Vagina (tissue), 2 donors: ENCODE measurements at regions of chr9 and their contacts with region 1.

Region 1: GRCh38 chr9:36704148-36704547 is 131.5 kb downstream of the MELK start:
- DNase-seq: no peak
- H3K4me3 ChIP-seq: no peak overlapping the region
- H3K27ac ChIP-seq: no peak overlapping the region
- H3K4me1 ChIP-seq: no peaks in the 10 kb centered on the region
- H3K27me3 ChIP-seq: no peaks in the 10 kb centered on the region
- CTCF ChIP-seq: no peak
- POLR2A ChIP-seq: no peak

Region 2: DNA sequence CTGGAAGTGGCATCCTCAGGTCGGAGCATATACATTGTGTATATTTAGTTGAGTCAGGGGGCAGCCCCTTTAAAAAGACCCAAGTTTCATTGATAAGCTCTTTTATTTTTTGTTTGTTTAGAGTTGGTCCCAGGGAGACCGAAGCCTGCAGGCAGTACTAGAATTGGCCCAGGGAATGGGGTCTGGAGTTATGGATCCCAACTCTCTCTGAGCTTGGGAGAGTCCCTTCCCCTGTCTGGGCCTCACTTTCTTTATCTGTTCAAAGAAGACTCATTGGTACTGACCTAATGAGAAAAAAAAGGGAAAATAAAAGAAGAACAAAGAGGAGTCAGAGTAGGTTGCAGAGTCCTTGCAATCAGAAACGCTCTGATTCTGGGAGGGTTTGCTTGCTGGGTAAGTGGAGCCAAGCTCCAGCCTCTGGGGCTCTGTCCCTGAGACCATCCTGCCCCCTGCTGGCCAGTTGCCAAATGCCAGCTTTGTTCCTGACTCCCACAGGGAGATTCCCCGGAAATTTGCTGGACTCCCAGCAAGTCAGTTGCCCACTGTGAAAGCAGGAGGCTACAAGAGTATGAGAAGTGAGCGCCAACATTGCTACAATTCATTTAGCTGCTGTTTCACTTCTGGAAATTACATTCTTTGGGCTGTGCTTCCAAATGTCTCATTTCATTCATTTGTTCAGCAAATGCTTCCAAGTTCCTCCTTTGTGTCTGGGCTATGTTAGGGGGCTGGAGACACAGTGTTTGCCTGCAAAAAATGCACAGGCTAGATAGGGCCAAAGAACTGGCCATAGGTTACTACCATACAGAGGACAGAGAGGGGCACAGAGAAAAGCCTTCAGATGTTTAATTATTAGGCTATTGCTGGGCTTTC is 24.7 kb after region 1 on chr9:
- intact Hi-C with region 1: no loop called
- DNase-seq: no peak
- H3K4me3 ChIP-seq: no peak overlapping the region
- H3K27ac ChIP-seq: no peak overlapping the region
- H3K4me1 ChIP-seq: no peaks in the 10 kb centered on the region
- H3K27me3 ChIP-seq: no peaks in the 10 kb centered on the region
- CTCF ChIP-seq: no peak
- POLR2A ChIP-seq: no peak

Region 3: DNA sequence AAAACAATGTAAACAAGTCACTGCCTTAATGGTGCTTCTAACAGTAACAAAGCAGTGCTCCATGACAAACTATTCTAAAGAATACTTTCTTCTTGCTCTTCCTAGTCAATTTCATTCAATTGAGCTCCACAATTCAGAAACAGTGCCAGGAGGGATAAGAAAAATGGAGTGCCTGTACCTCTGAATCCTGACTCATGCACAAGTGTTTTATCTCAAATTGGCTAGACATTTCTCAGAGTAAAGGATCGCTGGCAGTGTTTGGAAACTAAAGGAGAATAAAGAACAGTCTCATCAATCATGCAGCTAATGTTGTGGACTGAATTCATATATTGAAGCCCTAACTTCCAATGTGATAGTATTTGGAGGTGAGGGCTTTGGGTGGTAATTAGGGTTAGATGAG is 1172.2 kb after region 1 on chr9:
- intact Hi-C with region 1: loop called (anchors 10 kb)
- DNase-seq: no peak
- H3K4me3 ChIP-seq: no peak overlapping the region
- H3K27ac ChIP-seq: no peak overlapping the region
- H3K4me1 ChIP-seq: no peaks in the 10 kb centered on the region
- H3K27me3 ChIP-seq: no peaks in the 10 kb centered on the region
- CTCF ChIP-seq: no peak
- POLR2A ChIP-seq: no peak